ENCODE measurements at regions of chr4 and their contacts with region 1.

Region 1: DNA sequence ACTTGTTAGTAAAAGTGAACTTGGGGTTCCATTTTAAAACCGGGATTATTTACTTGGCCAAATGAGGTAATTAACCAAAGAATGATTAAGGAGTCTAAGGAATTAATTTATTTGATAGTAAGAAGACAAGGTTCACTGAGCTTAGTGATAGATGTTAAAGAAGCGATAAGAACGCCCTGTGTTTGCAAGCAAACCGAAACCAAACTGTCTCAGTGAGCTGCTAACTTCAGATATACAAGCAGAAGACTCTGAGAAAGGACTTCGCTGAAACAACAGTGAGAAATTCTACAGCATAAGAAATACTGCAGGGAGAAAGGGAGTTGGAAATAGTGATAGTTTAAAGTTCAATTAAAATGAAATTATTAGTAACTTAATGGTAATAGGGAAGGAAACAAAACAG is 37.6 kb upstream of the SHISA3 start:
- DNase-seq: no peak
- H3K4me3 ChIP-seq: no peak overlapping the region
- H3K27ac ChIP-seq: no peak overlapping the region
- H3K4me1 ChIP-seq: peaks cover 3% of the 10 kb centered on the region
- H3K27me3 ChIP-seq: no peaks in the 10 kb centered on the region
- CTCF ChIP-seq: no peak
- EP300 ChIP-seq: no peak
- POLR2A ChIP-seq: no peak

Region 2: DNA sequence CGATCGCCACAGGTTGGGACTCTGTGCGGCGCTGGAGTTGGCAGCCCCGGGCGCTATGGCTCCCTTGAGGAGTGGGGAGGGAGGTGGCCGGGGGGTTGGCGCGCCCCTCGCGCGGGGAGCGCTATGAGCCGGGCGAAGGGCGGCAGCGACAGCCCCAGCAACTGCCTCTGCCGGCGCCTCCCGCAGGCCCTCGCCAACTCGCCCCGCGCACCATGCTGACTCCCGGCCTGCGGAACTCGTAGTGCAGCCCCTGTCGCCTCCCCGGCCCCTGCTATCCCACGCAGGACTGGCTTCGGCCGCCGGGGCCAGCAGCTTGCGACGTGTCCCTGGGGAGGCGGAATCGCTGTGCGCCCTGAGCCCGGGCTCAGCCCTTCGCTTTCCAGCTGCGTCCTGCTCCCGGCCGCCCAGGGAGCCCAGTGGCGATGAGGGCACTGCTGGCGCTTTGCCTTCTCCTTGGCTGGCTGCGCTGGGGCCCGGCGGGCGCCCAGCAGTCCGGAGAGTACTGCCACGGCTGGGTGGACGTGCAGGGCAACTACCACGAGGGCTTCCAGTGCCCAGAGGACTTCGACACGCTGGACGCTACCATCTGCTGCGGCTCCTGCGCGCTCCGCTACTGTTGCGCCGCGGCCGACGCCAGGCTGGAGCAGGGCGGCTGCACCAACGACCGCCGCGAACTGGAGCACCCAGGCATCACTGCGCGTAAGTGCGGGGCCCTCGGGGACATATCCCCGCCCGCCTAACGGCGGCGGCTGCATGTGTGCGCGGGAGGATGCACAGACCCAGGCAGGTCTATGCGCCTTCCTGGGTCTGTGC is 38.1 kb after region 1 on chr4:
- intact Hi-C with region 1: loop called in 1 of 4 experiments (anchors 1 kb)
- DNase-seq: no peak
- H3K4me3 ChIP-seq: peak overlapping the region; percentile 18
- H3K27ac ChIP-seq: no peak overlapping the region
- H3K4me1 ChIP-seq: peaks cover 2% of the 10 kb centered on the region
- H3K27me3 ChIP-seq: no peaks in the 10 kb centered on the region
- CTCF ChIP-seq: no peak
- EP300 ChIP-seq: no peak
- POLR2A ChIP-seq: no peak

Region 3: DNA sequence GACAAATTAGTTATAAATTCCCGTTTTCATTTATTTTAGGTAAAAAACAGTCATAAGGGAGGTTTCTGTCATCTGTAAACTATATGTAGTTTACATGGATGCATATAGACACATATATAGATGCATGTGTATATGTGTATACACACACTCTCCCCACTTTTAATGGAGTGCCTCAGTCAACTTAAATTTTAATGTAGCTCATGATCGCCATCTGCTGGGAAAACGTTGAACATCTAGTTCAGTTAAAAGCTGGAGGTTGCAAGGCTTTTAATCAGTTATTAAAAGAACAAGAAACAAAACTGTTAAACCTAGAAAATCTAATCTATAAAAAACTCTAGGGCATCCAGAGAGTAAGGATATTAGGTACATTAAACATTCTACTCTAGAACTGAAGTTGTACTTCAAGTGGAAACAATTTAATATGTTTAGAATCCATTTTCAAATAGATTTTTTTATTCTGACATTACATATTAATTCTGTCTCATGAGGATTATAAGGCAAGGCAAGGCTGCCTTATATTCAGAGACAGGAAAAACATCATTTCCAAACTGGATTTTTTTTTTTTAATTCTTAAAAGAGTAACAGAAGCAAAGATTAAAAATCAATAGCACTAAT is 160.2 kb after region 1 on chr4:
- intact Hi-C with region 1: loop called in 1 of 4 experiments (anchors 10 kb)
- DNase-seq: peak in 3 of 5 donors; percentile 22 to 57 (median 52)
- H3K4me3 ChIP-seq: no peak overlapping the region
- H3K27ac ChIP-seq: no peak overlapping the region
- H3K4me1 ChIP-seq: peaks cover 4% of the 10 kb centered on the region
- H3K27me3 ChIP-seq: no peaks in the 10 kb centered on the region
- CTCF ChIP-seq: peak; percentile 12 to 52 (median 41)
- EP300 ChIP-seq: no peak
- POLR2A ChIP-seq: no peak